Head of caudate nucleus (tissue), 42 donors: ENCODE measurements at regions of chr2 and their contacts with region 1.

Region 1: DNA sequence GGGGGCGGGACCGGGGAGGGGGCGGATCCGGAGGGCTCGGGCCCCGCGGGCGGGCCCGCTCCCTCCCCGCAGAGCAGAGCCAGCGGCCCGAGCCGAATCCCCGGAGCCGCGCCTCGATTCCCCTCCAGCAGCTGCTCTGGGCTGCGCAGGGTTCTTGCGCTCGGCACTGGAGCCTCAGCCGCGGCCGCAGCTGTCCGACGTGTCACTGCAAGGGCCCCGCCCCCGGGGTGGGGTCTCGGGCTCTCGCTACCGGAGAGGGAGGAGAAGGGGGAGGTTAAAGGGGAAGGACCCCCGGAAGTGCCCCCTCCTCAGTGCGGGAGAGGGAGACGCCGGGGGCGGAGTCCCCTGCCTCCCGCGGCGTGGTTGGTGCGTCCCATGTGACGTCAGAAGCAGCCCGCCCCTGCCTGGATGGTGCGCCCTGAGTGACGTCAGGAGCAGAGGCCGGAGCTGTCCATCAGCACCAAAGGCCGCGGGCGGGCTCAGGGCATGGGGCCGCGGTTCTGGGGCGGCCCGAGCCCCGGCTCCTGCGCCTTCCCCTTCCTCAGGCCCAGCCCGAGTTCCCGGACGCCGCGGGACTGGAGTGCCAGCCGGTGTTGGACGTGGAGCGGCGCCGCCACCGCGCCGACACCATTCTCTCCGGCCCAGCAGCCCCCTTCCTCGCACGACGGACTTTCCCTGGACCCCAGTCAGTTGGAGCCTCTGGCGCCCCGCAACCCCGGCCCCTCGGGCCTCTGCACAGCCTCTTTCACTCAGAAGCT is at the starts of genes CHPF and TMEM198:
- DNase-seq: peak; percentile 98 to 100 (median 99)

Region 2: DNA sequence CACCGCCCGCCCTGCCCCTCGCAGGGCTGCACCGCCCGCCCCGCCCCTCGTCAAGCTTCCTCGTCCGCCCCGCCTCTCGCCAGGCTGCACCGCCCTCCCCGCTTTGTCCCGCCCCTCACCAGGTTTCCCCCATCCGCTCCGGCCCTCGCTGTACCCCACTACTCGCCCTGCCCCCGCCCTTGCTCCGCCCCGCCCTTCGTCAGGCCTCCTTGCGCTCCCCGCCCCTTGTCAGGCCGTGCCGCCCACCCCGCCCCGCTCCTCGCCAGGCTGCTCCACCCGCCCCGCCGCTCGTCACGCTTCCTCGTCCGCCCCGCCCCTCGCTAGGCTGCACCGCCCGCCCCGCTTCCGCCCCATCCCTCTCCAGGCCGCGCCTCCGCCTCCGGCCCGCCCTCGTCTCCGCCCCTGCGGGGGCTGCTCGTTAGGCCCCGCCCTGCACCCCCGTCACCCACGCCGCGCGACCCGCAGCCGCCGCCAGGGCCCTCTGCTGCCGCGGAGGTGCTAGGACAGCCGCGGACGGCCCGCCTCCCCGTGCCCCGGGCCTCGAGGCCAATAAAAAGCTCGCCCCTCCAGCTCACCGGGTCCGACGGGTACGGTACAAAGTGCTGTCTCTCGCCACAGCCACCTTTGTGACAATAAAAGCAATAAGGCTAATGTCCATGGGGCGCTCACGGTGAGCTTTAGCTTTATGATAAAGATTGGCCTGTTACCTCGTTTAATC is 155.5 kb before region 1 on chr2:
- intact Hi-C with region 1: loop called (anchors 5 kb)
- DNase-seq: peak; percentile 91 to 100 (median 99)

Region 3: GRCh38 chr2:219597552-219598307 is 54.0 kb after region 1 on chr2 and contains the start of gene STK11IP:
- intact Hi-C with region 1: loop called (anchors 5 kb)
- DNase-seq: peak; percentile 91 to 99 (median 96)

Region 4: DNA sequence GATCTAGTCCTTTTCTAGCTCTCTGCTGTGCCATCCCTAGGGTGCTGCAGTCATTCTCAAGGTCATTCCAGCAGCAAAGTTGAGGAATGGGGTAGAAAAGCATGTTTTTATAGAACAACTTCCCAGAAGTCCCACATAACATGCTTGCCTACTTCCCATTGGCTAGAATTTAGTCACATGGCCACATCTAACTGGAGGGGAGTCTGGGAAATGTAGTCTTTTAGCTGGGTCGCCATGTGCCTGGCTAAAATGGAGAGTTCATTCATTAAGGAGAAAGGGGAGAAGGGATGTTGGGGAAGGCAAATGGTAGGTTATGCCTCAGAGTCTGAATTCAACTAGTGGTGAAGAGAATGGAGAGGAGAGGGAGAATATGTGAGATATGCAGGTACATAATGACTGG is 169.3 kb after region 1 on chr2:
- intact Hi-C with region 1: no loop called
- DNase-seq: peak in 1 of 42 donors; percentile 9